IMR-90 (cell line): ENCODE measurements at regions of chr11 and their contacts with region 1.

Region 1: DNA sequence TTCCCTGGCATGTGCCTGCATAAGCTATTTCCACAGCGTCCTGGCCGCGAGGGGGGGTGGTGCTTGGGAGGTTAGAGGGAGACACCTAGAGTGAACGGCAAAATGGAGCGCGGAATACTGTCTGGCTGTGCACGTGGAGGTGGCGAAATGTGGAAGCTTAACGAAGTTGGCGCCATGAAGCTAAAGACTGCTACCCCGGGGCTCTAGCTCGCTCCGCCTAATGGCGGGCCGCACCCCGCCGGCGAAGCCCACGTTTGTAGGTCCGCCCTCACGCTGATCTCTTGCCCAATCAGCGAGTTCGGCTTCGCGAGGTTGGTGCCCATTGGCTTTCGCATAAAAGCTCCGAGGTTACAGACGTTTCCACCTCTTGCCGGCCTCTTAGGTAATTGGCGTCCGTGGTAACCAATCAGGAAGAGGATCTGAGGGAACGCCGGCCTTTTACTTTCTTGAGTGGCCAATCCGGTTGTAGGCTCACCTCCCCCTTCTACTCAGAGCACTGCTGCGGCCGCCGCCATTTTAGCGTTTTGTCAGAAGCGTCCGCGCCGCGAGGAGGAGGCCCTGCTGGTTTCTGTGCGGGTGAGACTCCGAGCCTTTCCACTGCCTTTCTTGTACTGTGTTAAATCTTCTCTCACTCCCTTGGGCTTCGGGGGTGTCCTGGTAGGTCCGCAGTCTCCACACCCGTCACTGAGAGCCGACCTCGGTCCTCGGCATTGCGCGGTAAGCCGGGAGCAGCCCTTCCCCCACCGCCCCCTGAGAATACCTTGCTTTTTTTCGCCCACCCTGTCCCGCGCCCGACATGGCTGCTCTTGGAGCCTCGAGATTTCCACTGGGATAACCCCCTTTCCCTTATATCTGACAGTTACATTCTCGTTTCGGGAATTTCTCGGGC is at the start of gene RBM4:
- DNase-seq: peak; percentile 100
- ATAC-seq: peak; percentile 95
- H3K4me3 ChIP-seq: peak within 1 kb of the TSS; percentile 76
- H3K27ac ChIP-seq: peak within 1 kb of the TSS; percentile 87
- H3K4me1 ChIP-seq: peaks cover 17% of the 10 kb centered on the region
- H3K27me3 ChIP-seq: no peaks in the 10 kb centered on the region
- CTCF ChIP-seq: no peak; the same call in 1 of the 2 replicates
- POLR2A ChIP-seq: peak; percentile 93
- RAD21 ChIP-seq: no peak
- total RNA-seq, gene RBM4: 175 and 198 TPM in 2 replicates

Region 2: DNA sequence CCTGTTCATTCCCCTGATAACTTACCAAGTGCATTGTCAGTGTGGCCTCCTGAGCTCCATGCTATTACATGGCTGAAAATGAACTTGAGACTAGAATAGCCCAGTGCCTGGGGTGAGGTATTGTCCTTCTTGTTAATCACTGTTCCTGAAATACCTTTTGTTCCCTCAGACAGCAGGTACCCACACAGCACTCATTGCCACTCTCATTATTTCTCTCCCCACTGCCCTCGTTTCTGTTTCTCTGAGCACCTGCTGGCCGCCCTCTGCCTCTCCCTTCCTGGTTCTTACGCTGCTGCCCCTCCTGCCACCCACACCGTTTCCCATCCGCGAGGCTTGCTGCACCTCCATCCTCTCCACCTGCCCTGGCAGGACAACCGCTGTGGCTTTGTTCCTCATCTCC is 406.9 kb before region 1 on chr11:
- CTCF ChIA-PET with region 1: no interaction called
- POLR2A ChIA-PET with region 1: no interaction called
- dilution Hi-C with region 1: no loop called
- in situ Hi-C with region 1: no loop called
- intact Hi-C with region 1: no loop called
- DNase-seq: no peak
- ATAC-seq: no peak
- H3K4me3 ChIP-seq: no peak overlapping the region
- H3K27ac ChIP-seq: no peak overlapping the region
- H3K4me1 ChIP-seq: no peaks in the 10 kb centered on the region
- H3K27me3 ChIP-seq: no peaks in the 10 kb centered on the region
- CTCF ChIP-seq: no peak
- POLR2A ChIP-seq: no peak
- RAD21 ChIP-seq: no peak

Region 3: DNA sequence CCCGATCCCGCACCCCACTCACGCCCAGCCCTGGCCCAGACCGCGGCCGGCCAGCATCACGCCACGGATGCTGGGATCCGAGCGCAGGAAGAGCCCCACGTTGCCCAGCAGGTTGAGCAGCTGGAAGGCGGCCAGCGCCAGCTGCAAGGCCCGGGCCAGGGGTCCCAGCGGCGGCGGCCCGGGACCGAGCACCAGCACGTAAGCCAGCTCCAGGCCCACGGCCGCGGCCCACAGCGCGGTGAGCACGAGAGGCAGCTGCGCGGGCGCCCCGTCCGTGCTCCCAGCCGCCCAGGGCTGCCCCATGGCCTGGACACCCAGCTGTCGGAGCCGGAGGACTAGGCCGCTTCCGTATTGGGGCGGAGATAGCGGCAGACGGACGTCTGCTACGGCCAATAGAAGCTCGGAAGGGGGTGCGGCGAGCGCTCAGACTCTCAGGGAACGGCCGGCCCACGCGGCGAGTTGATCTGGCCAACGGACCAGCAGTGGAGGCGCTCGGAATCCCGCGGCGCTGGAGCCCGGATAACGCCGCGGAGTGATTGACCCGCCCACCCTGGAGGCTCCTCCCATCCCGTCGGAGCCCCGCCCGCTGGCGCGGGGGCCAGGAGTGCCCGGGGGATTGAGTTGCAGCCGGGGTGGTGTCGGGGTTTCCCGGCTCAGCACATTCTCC is 92.6 kb before region 1 on chr11 and contains the start of gene ZDHHC24:
- CTCF ChIA-PET with region 1: no interaction called
- POLR2A ChIA-PET with region 1: no interaction called
- dilution Hi-C with region 1: no loop called
- in situ Hi-C with region 1: no loop called
- intact Hi-C with region 1: loop called (anchors 2 kb)
- DNase-seq: peak; percentile 95
- ATAC-seq: peak; percentile 96
- H3K4me3 ChIP-seq: peak within 1 kb of the TSS; percentile 75
- H3K27ac ChIP-seq: peak within 1 kb of the TSS; percentile 30; the same call in 1 of the 2 replicates
- H3K4me1 ChIP-seq: peaks cover 6% of the 10 kb centered on the region
- H3K27me3 ChIP-seq: peaks cover 23% of the 10 kb centered on the region
- CTCF ChIP-seq: no peak
- POLR2A ChIP-seq: peak; percentile 87
- RAD21 ChIP-seq: no peak
- total RNA-seq, gene ZDHHC24: 3.2 and 3.6 TPM in 2 replicates

Region 4: GRCh38 chr11:66579017-66579606 is 59.3 kb before region 1 on chr11:
- CTCF ChIA-PET with region 1: no interaction called
- POLR2A ChIA-PET with region 1: no interaction called
- dilution Hi-C with region 1: no loop called
- in situ Hi-C with region 1: no loop called
- intact Hi-C with region 1: loop called (anchors 2 kb)
- DNase-seq: peak; percentile 77
- ATAC-seq: peak; percentile 93
- H3K4me3 ChIP-seq: no peak overlapping the region
- H3K27ac ChIP-seq: no peak overlapping the region
- H3K4me1 ChIP-seq: peaks cover 6% of the 10 kb centered on the region
- H3K27me3 ChIP-seq: no peaks in the 10 kb centered on the region
- CTCF ChIP-seq: peak; percentile 82
- POLR2A ChIP-seq: no peak
- RAD21 ChIP-seq: peak; percentile 85

Region 5: DNA sequence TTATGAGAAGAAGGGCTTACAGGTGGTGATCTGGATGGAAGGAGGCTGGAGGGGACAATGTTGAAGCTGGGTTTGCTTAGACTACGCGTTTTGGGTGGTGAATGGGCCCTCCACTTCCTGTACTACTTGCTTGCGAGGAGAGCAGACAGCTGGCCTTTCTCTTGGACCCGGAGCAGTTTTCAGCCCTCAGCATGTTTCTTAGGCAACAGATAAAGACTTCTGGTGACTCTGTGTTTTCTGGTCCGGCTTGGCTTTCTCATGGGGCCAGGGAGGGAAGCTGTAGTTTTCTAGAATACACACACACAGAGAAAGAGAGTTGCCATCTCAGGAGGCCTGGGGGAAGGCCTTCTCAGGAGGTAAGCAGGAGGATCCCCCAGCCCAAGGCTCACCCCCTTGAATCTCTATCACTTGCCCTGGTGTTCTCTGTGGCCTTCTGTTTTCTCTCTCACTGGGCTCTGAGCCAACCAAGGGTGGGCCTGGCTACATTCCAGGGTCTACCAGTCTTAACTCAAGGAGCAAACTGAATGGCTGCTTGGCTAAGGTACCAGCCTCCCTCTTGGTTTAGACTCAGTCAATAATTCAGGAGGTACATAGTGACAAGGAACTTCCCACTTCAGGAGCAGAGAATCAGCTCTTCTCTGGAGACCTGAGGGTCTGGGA is 43.0 kb before region 1 on chr11:
- CTCF ChIA-PET with region 1: interaction called, 5 read pairs
- POLR2A ChIA-PET with region 1: interaction called, 17 read pairs
- dilution Hi-C with region 1: no loop called
- in situ Hi-C with region 1: no loop called
- intact Hi-C with region 1: no loop called
- DNase-seq: peak; percentile 76
- ATAC-seq: peak; percentile 22
- H3K4me3 ChIP-seq: no peak overlapping the region
- H3K27ac ChIP-seq: peak overlapping the region; percentile 61; the same call in 1 of the 2 replicates
- H3K4me1 ChIP-seq: peaks cover 11% of the 10 kb centered on the region
- H3K27me3 ChIP-seq: no peaks in the 10 kb centered on the region
- CTCF ChIP-seq: no peak
- POLR2A ChIP-seq: no peak
- RAD21 ChIP-seq: no peak

Region 6: GRCh38 chr11:66616379-66617154 is 21.9 kb before region 1 on chr11 and contains the start of gene RBM14:
- CTCF ChIA-PET with region 1: interaction called, 3 read pairs
- POLR2A ChIA-PET with region 1: interaction called, 11 read pairs
- dilution Hi-C with region 1: no loop called
- in situ Hi-C with region 1: no loop called
- intact Hi-C with region 1: loop called (anchors 2 kb)
- DNase-seq: peak; percentile 99
- ATAC-seq: peak; percentile 95
- H3K4me3 ChIP-seq: peak within 1 kb of the TSS; percentile 65
- H3K27ac ChIP-seq: peak within 1 kb of the TSS; percentile 86
- H3K4me1 ChIP-seq: peaks cover 2% of the 10 kb centered on the region; the same call in 1 of the 2 replicates
- H3K27me3 ChIP-seq: no peaks in the 10 kb centered on the region
- CTCF ChIP-seq: no peak
- POLR2A ChIP-seq: peak; percentile 99
- RAD21 ChIP-seq: no peak; the same call in 1 of the 2 replicates
- total RNA-seq, gene RBM14: 9.3 and 12.2 TPM in 2 replicates